Motor neuron (in vitro differentiated cells): ENCODE measurements at regions of chr12 and their contacts with region 1.

Region 1: GRCh38 chr12:105705765-105706164 is 375.3 kb downstream of the C12orf75 start:
- ATAC-seq: peak; percentile 6 to 64 (median 35)
- H3K4me3 ChIP-seq: no peak overlapping the region
- H3K27ac ChIP-seq: no peak overlapping the region
- H3K4me1 ChIP-seq: peaks cover 14 to 17% of the 10 kb centered on the region in 2 donors

Region 2: DNA sequence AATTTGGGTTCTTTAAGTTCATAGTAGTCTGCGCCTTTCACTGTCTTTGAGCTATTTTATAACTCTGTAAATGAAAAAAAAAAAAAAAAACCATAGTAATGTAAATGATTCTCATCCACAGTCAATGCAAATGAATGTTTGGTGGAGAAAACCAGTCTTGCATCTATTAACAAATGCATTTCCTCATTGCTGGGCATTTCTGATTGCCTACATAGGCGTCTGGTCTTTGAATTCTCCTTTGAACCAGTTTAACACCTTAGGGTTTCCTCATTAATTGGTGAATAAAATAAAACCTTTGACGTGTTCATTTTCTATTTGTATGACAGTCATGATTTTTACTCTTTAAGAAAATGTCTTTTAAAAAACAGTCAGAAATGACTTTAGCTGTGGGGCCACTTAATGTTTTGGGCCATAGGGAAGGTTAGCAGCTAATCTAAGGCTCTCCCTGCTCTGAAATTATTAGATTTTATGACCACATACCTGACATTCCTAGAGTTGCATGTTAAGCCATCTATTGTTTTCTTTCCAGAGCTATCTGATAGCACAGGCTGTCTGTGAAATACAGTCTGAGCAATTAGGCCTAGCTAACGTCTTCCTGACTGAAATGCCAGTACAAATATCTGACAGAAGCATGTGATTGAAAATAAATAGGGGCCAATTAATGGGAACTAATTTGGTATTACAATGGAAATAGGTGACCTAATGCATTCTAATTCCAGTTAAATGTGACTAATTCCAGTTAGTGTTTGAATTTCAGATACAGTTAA is 260.3 kb before region 1 on chr12:
- in situ Hi-C with region 1: no loop called
- ATAC-seq: peak in 7 of 8 experiments; percentile 38 to 83 (median 61)
- H3K4me3 ChIP-seq: no peak overlapping the region
- H3K27ac ChIP-seq: no peak overlapping the region
- H3K4me1 ChIP-seq: peaks cover 0 to 12% of the 10 kb centered on the region in 2 donors

Region 3: DNA sequence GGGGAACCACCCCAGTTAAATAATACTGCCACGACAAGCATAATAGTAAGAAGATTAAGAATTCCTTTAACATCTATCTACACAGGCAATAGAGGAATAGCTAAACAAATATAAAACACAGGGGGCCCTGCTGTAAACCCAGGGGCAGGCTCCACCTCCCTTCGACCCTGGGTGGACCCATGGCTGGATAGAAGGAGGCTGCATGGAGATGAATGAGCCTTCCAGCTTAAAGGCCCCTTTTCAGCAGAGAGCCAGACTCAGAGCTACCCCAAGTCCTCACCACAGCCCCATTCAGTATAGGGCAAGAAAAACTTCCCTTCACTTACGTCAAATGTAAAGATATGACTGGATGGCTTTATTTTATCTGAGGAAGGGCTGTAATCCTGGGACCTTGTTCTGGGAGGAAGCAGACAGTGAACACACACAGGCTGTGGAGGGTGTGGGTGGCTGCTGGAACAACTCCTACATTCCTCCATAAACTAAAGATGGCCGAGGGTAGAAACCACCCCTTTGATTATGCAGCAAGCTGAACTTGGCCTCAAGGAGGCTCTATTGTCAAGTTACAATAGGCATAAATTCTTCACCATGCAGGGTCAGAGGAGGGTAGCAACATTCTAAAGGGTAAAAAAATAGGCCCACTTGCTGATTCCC is 402.5 kb after region 1 on chr12:
- in situ Hi-C with region 1: loop called in 1 of 9 experiments (anchors 25 kb)
- ATAC-seq: peak; percentile 60 to 96 (median 82)
- H3K4me3 ChIP-seq: no peak overlapping the region
- H3K27ac ChIP-seq: peak overlapping the region; percentile 89 to 93
- H3K4me1 ChIP-seq: peaks cover 72 to 73% of the 10 kb centered on the region in 2 donors

Region 4: DNA sequence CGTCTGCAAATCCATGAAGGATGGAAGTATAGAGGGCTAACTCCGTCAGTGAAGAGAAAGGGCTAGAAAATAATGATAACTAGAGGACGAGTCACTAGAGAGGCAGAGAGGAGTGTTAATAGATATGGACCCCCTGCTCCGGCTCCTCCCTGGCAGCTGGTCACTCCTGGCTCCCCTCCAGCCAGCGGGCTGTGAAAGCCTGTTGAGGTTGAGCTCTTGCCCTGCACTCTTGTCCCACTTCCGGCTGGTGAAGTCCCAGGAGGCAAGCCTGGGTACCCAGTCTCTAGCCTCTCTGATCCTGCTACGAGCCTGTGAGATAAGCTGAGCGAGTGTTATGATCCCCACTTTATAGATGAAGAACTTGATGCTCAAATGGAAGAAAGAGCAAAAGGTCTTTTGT is 967.4 kb after region 1 on chr12:
- in situ Hi-C with region 1: no loop called
- ATAC-seq: peak in 5 of 8 experiments; percentile 46 to 62 (median 53)
- H3K4me3 ChIP-seq: no peak overlapping the region
- H3K27ac ChIP-seq: peak overlapping the region in 1 of 2 donors; percentile 50
- H3K4me1 ChIP-seq: peaks cover 30 to 32% of the 10 kb centered on the region in 2 donors